HEK293 (cell line): ENCODE measurements at regions of chr5 and their contacts with region 1.

Region 1: DNA sequence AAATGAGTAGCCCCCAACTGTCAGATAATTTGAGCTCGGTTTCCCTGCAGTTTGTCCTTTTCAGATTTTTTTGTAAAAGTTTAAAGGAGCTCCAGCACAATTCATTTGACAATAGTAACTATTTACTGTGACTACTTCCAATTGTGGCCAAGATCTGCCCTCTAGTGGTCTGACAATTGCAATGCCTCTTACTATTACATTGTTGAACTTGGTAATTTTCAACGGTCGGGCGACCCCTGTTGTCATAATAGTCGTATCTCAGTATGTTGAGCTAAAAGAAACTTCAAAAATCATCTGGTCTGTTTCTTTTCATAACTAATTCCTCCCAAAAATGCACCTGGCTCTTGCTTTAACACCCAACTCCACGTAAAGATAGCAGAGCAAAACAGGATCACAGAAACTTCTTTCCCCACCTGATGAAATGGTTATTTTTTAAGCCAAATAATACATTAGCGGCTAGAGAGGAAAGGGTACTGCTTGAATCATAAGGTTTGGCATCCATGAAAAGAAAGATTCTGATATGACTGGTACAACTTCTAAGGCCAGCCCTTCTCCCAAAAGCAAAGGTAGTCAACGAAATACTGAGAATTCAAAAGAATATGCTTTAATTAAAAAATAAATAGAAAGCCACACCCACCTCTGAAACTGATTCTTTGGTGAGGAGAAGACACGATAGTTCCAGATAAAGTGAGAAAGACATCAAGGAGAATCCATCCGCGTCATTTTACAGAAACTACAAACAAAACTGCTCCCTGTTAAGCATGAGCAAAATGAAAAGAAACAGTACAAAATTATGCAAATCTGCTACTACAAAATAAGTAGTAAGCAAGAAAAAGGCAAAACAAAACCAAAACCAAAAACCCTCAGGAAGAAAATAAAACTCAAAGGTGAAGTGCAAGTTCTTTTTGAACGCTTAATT is 76.9 kb upstream of the HTR4 start:
- H3K4me3 ChIP-seq: no peak overlapping the region
- H3K27ac ChIP-seq: no peak overlapping the region
- H3K4me1 ChIP-seq: peaks cover 10% of the 10 kb centered on the region; the same call in 1 of the 2 replicates
- CTCF ChIP-seq: peak; percentile 82

Region 2: GRCh38 chr5:148374692-148375360 is 356.4 kb before region 1 on chr5:
- CTCF ChIA-PET with region 1: interaction called, 13 read pairs
- POLR2A ChIA-PET with region 1: no interaction called
- H3K4me3 ChIP-seq: no peak overlapping the region
- H3K27ac ChIP-seq: no peak overlapping the region
- H3K4me1 ChIP-seq: no peaks in the 10 kb centered on the region
- CTCF ChIP-seq: peak; percentile 47; the same call in 1 of the 2 replicates

Region 3: GRCh38 chr5:148457183-148457620 is 274.0 kb before region 1 on chr5:
- CTCF ChIA-PET with region 1: interaction called, 10 read pairs
- POLR2A ChIA-PET with region 1: no interaction called
- H3K4me3 ChIP-seq: no peak overlapping the region
- H3K27ac ChIP-seq: no peak overlapping the region
- H3K4me1 ChIP-seq: no peaks in the 10 kb centered on the region
- CTCF ChIP-seq: 0 out of 2 replicates have a peak, but pooled peaks have one; percentile 24

Region 4: DNA sequence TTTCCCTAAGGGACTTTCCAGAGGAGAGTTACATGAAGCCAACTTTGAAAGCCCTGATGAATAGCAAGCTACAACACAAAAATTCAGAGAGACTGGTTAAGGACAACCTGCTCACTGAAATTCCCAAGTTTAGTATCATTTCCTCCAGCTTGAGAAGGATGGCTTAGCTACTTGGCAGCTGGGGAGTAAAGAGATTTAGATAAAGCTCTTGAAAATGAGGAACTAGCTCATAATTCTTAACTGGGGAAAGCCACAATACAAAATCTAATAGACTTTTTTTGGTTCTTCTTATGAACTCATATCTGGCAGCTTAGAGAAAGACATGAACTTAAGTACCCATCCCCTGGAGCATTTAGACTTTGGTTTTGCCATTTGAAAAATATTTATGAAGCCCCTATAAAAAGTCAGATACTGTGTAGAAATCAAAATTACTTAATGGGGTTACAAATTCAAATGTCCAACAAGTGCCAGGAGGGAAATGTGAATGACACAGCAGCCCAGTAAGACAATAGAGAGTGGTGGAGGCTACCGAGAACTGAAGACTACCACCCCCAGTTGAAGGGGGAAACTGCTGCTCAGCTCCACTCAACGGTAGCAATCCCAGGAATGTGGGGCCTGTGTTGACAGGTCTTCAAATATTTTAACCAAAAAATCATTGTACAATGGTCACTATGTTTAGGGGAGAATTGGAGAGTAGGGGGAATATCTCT is 15.8 kb after region 1 on chr5:
- CTCF ChIA-PET with region 1: interaction called, 19 read pairs
- POLR2A ChIA-PET with region 1: no interaction called
- H3K4me3 ChIP-seq: no peak overlapping the region
- H3K27ac ChIP-seq: no peak overlapping the region
- H3K4me1 ChIP-seq: no peaks in the 10 kb centered on the region
- CTCF ChIP-seq: no peak

Region 5: GRCh38 chr5:148998174-148998797 is 267.1 kb after region 1 on chr5:
- CTCF ChIA-PET with region 1: interaction called, 28 read pairs
- POLR2A ChIA-PET with region 1: no interaction called
- H3K4me3 ChIP-seq: no peak overlapping the region
- H3K27ac ChIP-seq: no peak overlapping the region
- H3K4me1 ChIP-seq: no peaks in the 10 kb centered on the region
- CTCF ChIP-seq: peak; percentile 28; the same call in 1 of the 2 replicates

Region 6: DNA sequence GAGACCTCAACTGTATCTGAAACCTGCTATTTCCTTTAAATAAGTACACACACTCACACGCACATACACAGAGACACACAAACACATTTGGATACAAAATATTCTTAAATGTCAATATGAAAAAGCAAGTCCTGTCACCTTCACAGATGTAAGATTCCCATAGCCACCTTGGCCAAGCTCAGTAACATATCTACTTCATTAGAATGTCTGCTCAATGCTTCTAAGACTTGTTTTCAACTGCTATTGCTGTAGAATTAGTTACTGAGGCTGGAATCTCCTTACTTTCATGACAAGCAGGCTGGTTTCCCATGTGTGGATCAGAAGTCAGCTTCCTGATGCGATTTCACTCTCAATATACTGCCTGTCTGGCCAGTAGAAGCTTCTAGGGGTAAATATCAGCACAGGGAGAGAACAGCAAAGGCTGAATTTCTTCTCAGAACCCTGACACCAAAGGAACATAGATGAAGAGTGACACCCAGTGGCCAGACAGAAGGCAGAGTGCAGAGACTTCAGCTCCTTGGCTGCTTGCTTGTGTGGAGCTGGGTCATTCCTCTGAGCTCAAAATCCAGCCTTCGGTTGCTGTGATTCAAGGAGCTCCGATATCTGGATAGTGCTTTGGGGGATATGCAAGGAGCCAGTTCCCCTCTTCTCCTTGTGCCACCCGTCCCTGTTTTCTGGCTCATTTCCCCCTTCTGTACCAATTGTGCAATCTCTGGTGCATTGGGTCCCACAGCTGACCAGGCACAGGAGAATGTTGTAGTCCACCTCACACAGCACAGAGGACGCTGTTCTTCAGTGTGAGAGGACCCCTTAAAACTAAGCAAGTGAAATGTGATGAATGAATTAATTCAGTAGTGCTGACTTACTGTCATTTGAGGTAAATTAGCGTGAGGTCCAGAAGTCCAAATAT is 383.5 kb after region 1 on chr5:
- CTCF ChIA-PET with region 1: interaction called, 395 read pairs
- POLR2A ChIA-PET with region 1: interaction called, 3 read pairs
- H3K4me3 ChIP-seq: no peak overlapping the region
- H3K27ac ChIP-seq: no peak overlapping the region
- H3K4me1 ChIP-seq: peaks cover 5% of the 10 kb centered on the region
- CTCF ChIP-seq: peak; percentile 74; the same call in 1 of the 2 replicates